ENCODE measurements at regions of chr14 and their contacts with region 1.

Region 1: DNA sequence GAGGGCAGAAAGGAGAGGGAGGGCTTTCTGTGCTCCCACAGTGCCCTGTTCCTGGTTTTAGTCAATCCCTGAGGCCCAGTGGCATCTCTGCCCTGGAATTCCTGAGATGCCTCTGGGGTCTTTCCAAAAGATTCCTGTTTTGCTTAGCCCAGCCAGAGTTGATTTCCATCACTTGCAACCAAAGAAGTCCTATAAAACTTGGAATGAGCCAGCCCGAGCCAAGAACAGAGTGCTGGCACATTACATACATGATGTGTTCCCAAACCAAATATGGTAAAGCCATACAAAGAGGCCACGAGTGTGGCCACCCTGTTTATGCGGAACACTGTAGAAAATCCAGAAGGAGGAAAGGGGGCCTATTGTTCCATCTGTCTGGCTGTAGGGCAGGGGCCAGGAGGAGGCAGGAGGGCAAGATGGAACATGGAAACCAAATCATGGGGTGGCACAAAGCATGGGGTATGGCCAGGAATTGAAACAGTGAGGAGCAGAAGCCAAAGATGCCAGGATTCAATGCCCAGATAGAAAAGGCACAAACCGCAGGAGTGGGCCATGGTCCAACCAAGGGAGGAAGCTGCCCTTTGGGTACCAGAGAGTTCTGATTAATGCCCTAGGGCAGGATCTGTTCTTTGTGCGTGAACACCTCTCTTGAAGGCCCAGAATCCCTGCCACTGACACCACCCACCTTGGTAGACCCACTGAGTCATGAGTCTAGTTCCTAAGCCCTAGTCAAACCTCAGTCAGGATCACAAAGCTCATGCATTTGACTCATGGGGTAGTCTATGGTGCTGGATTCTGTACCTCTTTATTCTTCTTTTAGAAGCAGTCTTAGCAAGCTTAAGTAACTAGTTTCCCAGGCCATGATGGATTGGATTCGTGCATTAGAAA is 75.2 kb downstream of the LRRC74A start:
- DNase-seq: no peak
- ATAC-seq: no peak
- H3K4me3 Mint-ChIP-seq: no peak overlapping the region
- H3K27ac Mint-ChIP-seq: peak overlapping the region in 1 of 10 donors; percentile 23
- H3K4me1 Mint-ChIP-seq: peaks cover 7 to 23% (median 18%) of the 10 kb centered on the region in 4 donors
- H3K27me3 Mint-ChIP-seq: peaks cover 0 to 3% (median 0%) of the 10 kb centered on the region in 5 donors

Region 2: GRCh38 chr14:76848890-76849289 is 52.5 kb before region 1 on chr14:
- POLR2A ChIA-PET with region 1: no interaction called
- DNase-seq: no peak
- ATAC-seq: no peak
- H3K4me3 Mint-ChIP-seq: no peak overlapping the region
- H3K27ac Mint-ChIP-seq: no peak overlapping the region
- H3K4me1 Mint-ChIP-seq: peaks cover 8 to 14% (median 11%) of the 10 kb centered on the region in 4 donors
- H3K27me3 Mint-ChIP-seq: peaks cover 0 to 7% (median 3%) of the 10 kb centered on the region in 5 donors

Region 3: GRCh38 chr14:77782202-77782601 is 880.8 kb after region 1 on chr14:
- POLR2A ChIA-PET with region 1: interaction called, 10 read pairs
- DNase-seq: no peak
- ATAC-seq: no peak
- H3K4me3 Mint-ChIP-seq: no peak overlapping the region
- H3K27ac Mint-ChIP-seq: no peak overlapping the region
- H3K4me1 Mint-ChIP-seq: no peaks in the 10 kb centered on the region
- H3K27me3 Mint-ChIP-seq: no peaks in the 10 kb centered on the region

Measured in naive thymus-derived CD8-positive, alpha-beta T cell (primary cell).